ENCODE measurements at regions of chr1 and their contacts with region 1.

Region 1: DNA sequence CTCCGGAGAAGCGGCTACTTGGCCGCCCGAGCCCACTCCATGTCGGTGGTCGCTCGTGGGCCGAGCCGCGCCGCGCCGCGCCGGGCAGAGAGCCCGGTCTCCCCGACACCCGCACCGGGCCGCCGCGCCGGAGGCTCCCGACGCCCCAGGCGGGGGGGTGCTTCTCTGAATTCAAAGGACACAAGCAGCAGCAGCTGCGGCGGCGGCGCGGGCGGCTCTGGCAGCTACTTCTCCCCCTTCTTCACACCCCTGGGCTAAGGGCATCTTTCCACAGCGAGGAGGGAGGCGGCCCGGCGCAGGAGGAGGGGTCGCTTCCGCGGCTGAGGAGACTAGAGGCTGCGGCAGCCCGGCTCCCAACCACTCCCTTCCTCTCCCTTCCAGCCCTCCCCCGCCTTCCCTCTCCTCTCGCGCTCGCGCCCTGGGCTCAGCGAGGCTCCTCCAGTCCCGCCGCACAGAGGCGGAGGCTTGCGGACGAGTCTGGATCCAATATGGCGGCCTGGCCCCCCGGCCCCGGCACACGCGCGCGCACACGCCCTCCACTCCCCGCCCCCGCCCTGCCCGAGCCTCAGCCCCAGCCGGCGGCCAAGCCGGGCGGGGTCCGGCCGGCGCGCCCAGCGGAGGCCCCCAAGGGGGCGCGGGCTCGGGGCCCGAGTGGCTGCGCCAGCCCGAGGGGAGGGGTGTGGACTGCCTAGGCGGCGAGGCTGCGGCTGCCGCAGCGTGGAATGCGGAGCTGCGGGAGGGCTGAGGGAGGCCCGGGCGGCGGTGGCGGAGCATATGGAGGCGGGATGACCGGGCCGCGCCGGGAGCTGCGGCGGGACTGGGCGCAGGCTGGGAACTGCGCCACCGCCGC is at the start of gene CDC42BPA:
- DNase-seq: peak; percentile 64 to 82
- H3K4me3 ChIP-seq: peak within 1 kb of the TSS; percentile 77
- H3K27ac ChIP-seq: peak within 1 kb of the TSS; percentile 73
- H3K4me1 ChIP-seq: peaks cover 37% of the 10 kb centered on the region
- H3K27me3 ChIP-seq: no peaks in the 10 kb centered on the region
- CTCF ChIP-seq: no peak
- total RNA-seq, gene CDC42BPA: 45.5 and 47.5 TPM in 2 replicates

Region 2: DNA sequence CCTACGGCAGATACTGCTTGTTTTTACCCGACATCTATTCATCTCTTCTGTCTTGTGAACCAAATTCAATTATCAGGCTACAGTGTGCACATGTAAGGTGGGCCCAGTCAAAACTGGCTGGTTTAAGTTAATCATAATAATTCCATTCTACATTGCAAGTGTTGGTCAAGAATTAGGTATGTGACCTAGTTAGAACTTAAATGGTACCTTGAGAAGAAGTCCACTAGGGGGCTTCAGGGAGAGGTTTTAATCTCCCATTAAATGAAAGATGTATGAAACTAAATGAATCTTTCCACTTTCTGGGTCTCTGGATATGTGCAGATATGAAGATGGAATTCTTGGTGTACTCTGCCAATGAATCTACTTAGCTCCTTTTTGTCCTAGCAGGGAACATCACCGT is 187.0 kb before region 1 on chr1:
- CTCF ChIA-PET with region 1: no interaction called
- POLR2A ChIA-PET with region 1: no interaction called
- intact Hi-C with region 1: loop called (anchors 10 kb)
- DNase-seq: no peak
- H3K4me3 ChIP-seq: no peak overlapping the region
- H3K27ac ChIP-seq: no peak overlapping the region
- H3K4me1 ChIP-seq: no peaks in the 10 kb centered on the region
- H3K27me3 ChIP-seq: no peaks in the 10 kb centered on the region
- CTCF ChIP-seq: peak; percentile 69

Region 3: GRCh38 chr1:227234998-227235405 is 83.2 kb before region 1 on chr1:
- CTCF ChIA-PET with region 1: interaction called, 5 read pairs
- POLR2A ChIA-PET with region 1: no interaction called
- intact Hi-C with region 1: loop called (anchors 2 kb)
- DNase-seq: peak; percentile 19 to 58
- H3K4me3 ChIP-seq: no peak overlapping the region
- H3K27ac ChIP-seq: no peak overlapping the region
- H3K4me1 ChIP-seq: no peaks in the 10 kb centered on the region
- H3K27me3 ChIP-seq: no peaks in the 10 kb centered on the region
- CTCF ChIP-seq: peak; percentile 51

Region 4: DNA sequence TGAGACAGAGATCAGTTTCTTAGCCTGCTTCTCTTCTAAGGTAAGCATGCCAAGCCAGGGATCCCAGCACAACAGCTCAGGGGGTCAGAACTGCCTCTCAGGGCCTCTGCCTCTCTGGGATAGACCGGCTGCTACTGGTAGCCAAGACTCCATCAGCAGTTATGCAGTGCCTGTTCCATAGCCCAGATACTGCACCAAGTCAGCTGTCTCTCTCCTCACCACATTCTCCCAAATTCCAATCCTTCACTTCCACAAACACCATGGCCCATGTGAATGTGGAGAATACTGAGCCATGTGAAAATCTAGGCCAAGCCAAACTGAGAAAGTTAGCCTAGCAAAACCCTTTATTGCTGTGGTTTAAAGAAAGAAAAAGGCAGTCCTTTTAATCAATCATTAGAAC is 37.4 kb before region 1 on chr1:
- CTCF ChIA-PET with region 1: no interaction called
- POLR2A ChIA-PET with region 1: no interaction called
- intact Hi-C with region 1: no loop called
- DNase-seq: no peak
- H3K4me3 ChIP-seq: no peak overlapping the region
- H3K27ac ChIP-seq: no peak overlapping the region
- H3K4me1 ChIP-seq: no peaks in the 10 kb centered on the region
- H3K27me3 ChIP-seq: no peaks in the 10 kb centered on the region
- CTCF ChIP-seq: no peak

Region 5: GRCh38 chr1:227299688-227300087 is 18.5 kb before region 1 on chr1:
- CTCF ChIA-PET with region 1: no interaction called
- POLR2A ChIA-PET with region 1: interaction called, 5 read pairs
- intact Hi-C with region 1: loop called (anchors 2 kb)
- DNase-seq: peak in 1 of 2 experiments; percentile 93
- H3K4me3 ChIP-seq: peak overlapping the region; percentile 34
- H3K27ac ChIP-seq: peak overlapping the region; percentile 91
- H3K4me1 ChIP-seq: peaks cover 25% of the 10 kb centered on the region
- H3K27me3 ChIP-seq: no peaks in the 10 kb centered on the region
- CTCF ChIP-seq: no peak

Region 6: GRCh38 chr1:227357171-227357880 is 39.1 kb after region 1 on chr1:
- CTCF ChIA-PET with region 1: no interaction called
- POLR2A ChIA-PET with region 1: interaction called, 4 read pairs
- intact Hi-C with region 1: loop called (anchors 1 kb)
- DNase-seq: peak; percentile 83 to 89
- H3K4me3 ChIP-seq: peak overlapping the region; percentile 4; the same call in 1 of the 2 replicates
- H3K27ac ChIP-seq: peak overlapping the region; percentile 96
- H3K4me1 ChIP-seq: peaks cover 33% of the 10 kb centered on the region
- H3K27me3 ChIP-seq: no peaks in the 10 kb centered on the region
- CTCF ChIP-seq: no peak

Region 7: DNA sequence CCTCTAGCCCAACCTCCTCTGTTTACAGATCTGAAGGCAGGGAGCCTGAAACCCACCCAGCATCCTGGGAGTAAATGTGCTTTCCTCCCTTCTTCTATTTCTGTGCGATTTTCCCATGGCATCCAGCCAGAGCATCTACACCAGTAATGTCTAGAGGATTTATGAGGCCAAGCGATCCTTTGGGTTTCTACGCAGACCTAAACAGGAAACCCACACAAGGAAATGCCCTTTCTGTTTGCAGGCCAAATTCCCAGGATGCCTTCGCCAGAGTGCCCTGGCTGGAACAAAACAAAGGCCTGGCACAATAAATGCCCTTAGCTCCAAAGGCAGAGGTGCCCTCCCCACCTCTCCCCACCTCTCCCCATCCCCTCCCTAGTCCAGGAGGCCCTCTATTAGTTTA is 110.6 kb after region 1 on chr1:
- CTCF ChIA-PET with region 1: no interaction called
- POLR2A ChIA-PET with region 1: interaction called, 7 read pairs
- intact Hi-C with region 1: loop called (anchors 1 kb)
- DNase-seq: peak; percentile 79 to 93
- H3K4me3 ChIP-seq: no peak overlapping the region
- H3K27ac ChIP-seq: peak overlapping the region; percentile 58
- H3K4me1 ChIP-seq: peaks cover 24% of the 10 kb centered on the region
- H3K27me3 ChIP-seq: no peaks in the 10 kb centered on the region
- CTCF ChIP-seq: no peak

Measured in PC-9 (cell line).